Calu3 (cell line): ENCODE measurements at regions of chr2 and their contacts with region 1.

Region 1: GRCh38 chr2:186841940-186842339 is 7.0 kb downstream of the ZSWIM2 start:
- DNase-seq: no peak
- H3K4me3 Mint-ChIP-seq: no peak overlapping the region
- H3K27ac Mint-ChIP-seq: no peak overlapping the region
- H3K4me1 Mint-ChIP-seq: peaks cover 9% of the 10 kb centered on the region
- H3K27me3 Mint-ChIP-seq: no peaks in the 10 kb centered on the region
- CTCF ChIP-seq: no peak

Region 2: GRCh38 chr2:186695081-186695756 is 146.7 kb before region 1 on chr2:
- CTCF ChIA-PET with region 1: no interaction called
- intact Hi-C with region 1: loop called (anchors 5 kb)
- DNase-seq: no peak
- H3K4me3 Mint-ChIP-seq: peak overlapping the region; percentile 82
- H3K27ac Mint-ChIP-seq: peak overlapping the region; percentile 49
- H3K4me1 Mint-ChIP-seq: peaks cover 36% of the 10 kb centered on the region
- H3K27me3 Mint-ChIP-seq: no peaks in the 10 kb centered on the region
- CTCF ChIP-seq: no peak